ENCODE measurements at regions of chr1 and their contacts with region 1.

Region 1: GRCh38 chr1:115469703-115470476 is 131.8 kb upstream of the NGF start:
- DNase-seq: peak; percentile 83 to 89
- H3K4me3 ChIP-seq: no peak overlapping the region
- H3K27ac ChIP-seq: peak overlapping the region; percentile 53 to 65 (median 53)
- H3K4me1 ChIP-seq: peaks cover 9 to 27% of the 10 kb centered on the region in 2 donors
- H3K27me3 ChIP-seq: no peaks in the 10 kb centered on the region
- CTCF ChIP-seq: peak; percentile 44 to 93 (median 80)
- POLR2A ChIP-seq: no peak

Region 2: DNA sequence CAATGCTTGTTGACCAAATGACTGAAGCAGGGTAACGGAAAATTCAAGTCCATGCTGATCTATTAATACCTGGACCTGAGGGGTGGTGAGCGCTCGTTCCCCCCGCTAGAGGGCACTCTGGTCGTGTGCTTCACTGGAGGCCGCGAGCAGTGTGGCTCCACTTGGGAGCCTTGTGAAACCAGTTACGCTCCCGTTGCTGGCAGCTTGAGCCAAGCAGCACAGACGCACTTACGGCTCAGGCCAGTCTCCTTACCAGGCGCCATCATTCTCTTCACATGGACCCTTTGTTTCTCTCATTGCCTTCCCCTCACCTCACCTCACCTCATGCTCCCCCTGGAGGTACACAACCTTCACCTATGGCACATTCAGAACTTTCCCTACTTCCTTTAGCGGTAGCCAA is 330.9 kb before region 1 on chr1:
- intact Hi-C with region 1: loop called (anchors 10 kb)
- DNase-seq: peak; percentile 92 to 93
- H3K4me3 ChIP-seq: no peak overlapping the region
- H3K27ac ChIP-seq: no peak overlapping the region
- H3K4me1 ChIP-seq: peaks cover 0 to 4% of the 10 kb centered on the region in 2 donors
- H3K27me3 ChIP-seq: no peaks in the 10 kb centered on the region
- CTCF ChIP-seq: peak; percentile 63 to 94 (median 84)
- POLR2A ChIP-seq: no peak

Region 3: DNA sequence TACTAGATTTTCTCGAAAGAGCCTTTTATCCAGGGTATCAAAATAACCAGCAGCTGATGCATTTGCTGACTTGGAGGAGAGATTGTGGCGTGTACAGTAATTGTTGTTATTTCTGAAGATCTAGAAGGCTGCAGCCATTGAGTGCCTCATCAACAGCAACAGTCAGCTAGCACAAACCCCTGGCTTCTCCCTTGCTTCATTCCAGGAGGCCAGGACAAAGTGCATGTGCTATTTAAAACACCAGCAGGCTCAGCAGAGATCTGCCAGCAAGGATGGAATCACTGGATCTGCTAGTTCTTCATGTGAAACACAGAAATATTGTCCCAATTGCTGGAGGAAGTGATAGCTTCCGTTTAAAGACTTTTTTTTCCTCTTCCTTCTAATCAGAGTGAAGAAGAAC is 129.0 kb before region 1 on chr1:
- intact Hi-C with region 1: no loop called
- DNase-seq: no peak
- H3K4me3 ChIP-seq: no peak overlapping the region
- H3K27ac ChIP-seq: no peak overlapping the region
- H3K4me1 ChIP-seq: peaks cover 11 to 13% of the 10 kb centered on the region in 2 donors
- H3K27me3 ChIP-seq: no peaks in the 10 kb centered on the region
- CTCF ChIP-seq: no peak
- POLR2A ChIP-seq: no peak

Region 4: DNA sequence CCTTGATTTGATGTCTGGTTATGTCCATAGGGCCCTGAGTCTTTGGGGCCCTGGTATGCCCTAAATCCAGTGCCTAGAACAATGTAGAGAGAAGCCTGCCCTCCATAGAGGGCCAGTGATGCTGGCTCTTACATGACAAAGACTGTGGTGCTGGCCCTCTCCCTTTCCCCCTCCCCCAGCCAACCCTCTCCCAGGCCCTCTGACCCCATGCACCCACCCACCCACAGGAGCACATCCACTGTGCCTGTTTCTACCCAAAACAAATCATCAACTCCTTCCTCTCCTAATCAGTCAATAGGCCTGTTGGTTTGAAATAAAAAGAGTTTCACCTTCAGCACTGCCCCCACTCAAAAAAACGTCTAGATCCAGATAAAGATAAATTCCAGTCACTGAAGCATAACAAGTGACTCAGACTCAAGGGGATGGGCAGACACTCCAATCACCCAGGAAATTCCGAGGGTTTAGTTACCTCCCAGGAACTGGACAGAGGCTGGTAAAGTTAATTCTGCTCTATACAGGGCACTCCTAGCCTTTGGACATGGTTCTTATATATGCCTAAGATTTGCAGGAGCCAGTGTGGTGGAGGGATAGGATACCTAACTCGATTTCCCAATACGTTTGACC is 27.1 kb after region 1 on chr1:
- intact Hi-C with region 1: no loop called
- DNase-seq: peak; percentile 44 to 56
- H3K4me3 ChIP-seq: no peak overlapping the region
- H3K27ac ChIP-seq: peak overlapping the region; percentile 40 to 72 (median 48)
- H3K4me1 ChIP-seq: peaks cover 36 to 53% of the 10 kb centered on the region in 2 donors
- H3K27me3 ChIP-seq: no peaks in the 10 kb centered on the region
- CTCF ChIP-seq: no peak
- POLR2A ChIP-seq: no peak

Measured in thyroid gland (tissue), 4 donors.